HCT116 (cell line): ENCODE measurements at regions of chr19 and their contacts with region 1.

Region 1: DNA sequence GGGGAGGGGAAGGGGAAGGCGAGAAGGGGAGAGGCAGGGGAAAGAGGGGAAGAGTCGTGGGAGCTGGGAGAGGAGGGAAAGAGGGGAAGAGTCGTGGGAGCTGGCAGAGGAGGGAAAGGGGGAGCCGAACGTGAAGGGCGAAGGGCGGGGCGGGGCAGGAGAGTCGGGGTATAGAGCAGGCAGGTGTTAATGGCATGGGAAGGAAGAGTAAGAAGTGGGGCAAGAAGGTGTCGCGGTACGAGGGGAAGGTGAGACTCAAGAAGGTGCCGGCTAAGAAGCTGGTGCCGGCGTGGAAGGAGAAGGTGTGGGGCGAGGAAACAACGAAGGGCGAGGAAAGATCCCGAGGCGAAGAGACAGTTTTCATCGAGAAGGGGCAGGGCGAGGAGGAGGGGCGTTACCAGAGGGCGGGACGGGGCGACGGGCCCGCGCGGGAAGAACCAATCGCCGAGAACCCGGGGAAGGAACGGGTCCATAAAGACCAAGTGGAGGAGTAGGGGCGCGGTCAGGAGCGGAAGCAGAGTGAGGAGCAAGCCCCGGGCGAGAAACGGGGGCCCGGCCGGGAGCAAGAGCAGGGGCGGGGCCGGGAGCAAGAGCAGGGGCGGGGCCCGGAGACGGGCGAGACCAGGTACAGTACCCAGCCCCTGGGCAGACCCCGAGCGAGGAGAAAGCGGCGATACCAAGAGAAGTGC is 463 bp downstream of the CATSPERG start:
- DNase-seq: peak; percentile 91
- ATAC-seq: peak; percentile 81
- H3K4me3 ChIP-seq: peak overlapping the region; percentile 66 to 77
- H3K27ac ChIP-seq: peak overlapping the region; percentile 71
- H3K4me1 ChIP-seq: peaks cover 8 to 26% of the 10 kb centered on the region in 2 experiments
- H3K27me3 ChIP-seq: no peaks in the 10 kb centered on the region
- CTCF ChIP-seq: no peak
- POLR2A ChIP-seq: no peak
- RAD21 ChIP-seq: no peak

Region 2: GRCh38 chr19:38229585-38230073 is 106.5 kb before region 1 on chr19:
- CTCF ChIA-PET with region 1: interaction called, 15 read pairs
- POLR2A ChIA-PET with region 1: no interaction called
- RAD21 ChIA-PET with region 1: interaction called in 1 of 2 experiments, 4 read pairs
- intact Hi-C with region 1: loop called (anchors 1 kb)
- DNase-seq: peak; percentile 85
- ATAC-seq: peak; percentile 91
- H3K4me3 ChIP-seq: peak overlapping the region; percentile 54 to 61; a peak in 2 of 4 replicates
- H3K27ac ChIP-seq: no peak overlapping the region
- H3K4me1 ChIP-seq: peaks cover 10 to 33% of the 10 kb centered on the region in 2 experiments; a peak in 3 of 4 replicates
- H3K27me3 ChIP-seq: no peaks in the 10 kb centered on the region
- CTCF ChIP-seq: no peak
- POLR2A ChIP-seq: no peak
- RAD21 ChIP-seq: no peak

Region 3: GRCh38 chr19:38245826-38246498 is 90.1 kb before region 1 on chr19:
- CTCF ChIA-PET with region 1: interaction called, 40 read pairs
- POLR2A ChIA-PET with region 1: interaction called, 10 read pairs
- RAD21 ChIA-PET with region 1: interaction called, 3 to 4 read pairs
- intact Hi-C with region 1: loop called (anchors 1 kb)
- DNase-seq: no peak
- ATAC-seq: no peak
- H3K4me3 ChIP-seq: no peak overlapping the region
- H3K27ac ChIP-seq: no peak overlapping the region
- H3K4me1 ChIP-seq: peaks cover 15 to 40% of the 10 kb centered on the region in 2 experiments
- H3K27me3 ChIP-seq: no peaks in the 10 kb centered on the region
- CTCF ChIP-seq: no peak
- POLR2A ChIP-seq: no peak
- RAD21 ChIP-seq: no peak

Region 4: GRCh38 chr19:38374429-38375176 is 38.5 kb after region 1 on chr19 and contains the start of gene PSMD8:
- CTCF ChIA-PET with region 1: interaction called, 28 read pairs
- POLR2A ChIA-PET with region 1: interaction called, 8 read pairs
- RAD21 ChIA-PET with region 1: interaction called, 4 to 7 read pairs
- intact Hi-C with region 1: loop called (anchors 1 kb)
- DNase-seq: peak; percentile 99
- ATAC-seq: peak; percentile 98
- H3K4me3 ChIP-seq: peak within 1 kb of the TSS; percentile 97 to 98
- H3K27ac ChIP-seq: peak within 1 kb of the TSS; percentile 92
- H3K4me1 ChIP-seq: peaks cover 11 to 23% of the 10 kb centered on the region in 2 experiments
- H3K27me3 ChIP-seq: no peaks in the 10 kb centered on the region
- CTCF ChIP-seq: no peak
- POLR2A ChIP-seq: peak; percentile 92
- RAD21 ChIP-seq: peak; percentile 2; the same call in 1 of the 2 replicates
- total RNA-seq, gene PSMD8: 195 TPM

Region 5: GRCh38 chr19:38683393-38684080 is 347.4 kb after region 1 on chr19:
- CTCF ChIA-PET with region 1: no interaction called
- POLR2A ChIA-PET with region 1: no interaction called
- RAD21 ChIA-PET with region 1: no interaction called
- intact Hi-C with region 1: no loop called
- DNase-seq: peak; percentile 99
- ATAC-seq: peak; percentile 74
- H3K4me3 ChIP-seq: peak overlapping the region; percentile 36 to 53
- H3K27ac ChIP-seq: peak overlapping the region; percentile 98
- H3K4me1 ChIP-seq: peaks cover 82 to 99% of the 10 kb centered on the region in 2 experiments
- H3K27me3 ChIP-seq: no peaks in the 10 kb centered on the region
- CTCF ChIP-seq: no peak
- POLR2A ChIP-seq: no peak
- RAD21 ChIP-seq: no peak; the same call in none of the 2 replicates

Region 6: GRCh38 chr19:38729653-38730469 is 393.8 kb after region 1 on chr19:
- CTCF ChIA-PET with region 1: no interaction called
- POLR2A ChIA-PET with region 1: no interaction called
- RAD21 ChIA-PET with region 1: no interaction called
- intact Hi-C with region 1: no loop called
- DNase-seq: peak; percentile 24
- ATAC-seq: peak; percentile 74
- H3K4me3 ChIP-seq: no peak overlapping the region
- H3K27ac ChIP-seq: no peak overlapping the region
- H3K4me1 ChIP-seq: peaks cover 11 to 41% of the 10 kb centered on the region in 2 experiments; a peak in 3 of 4 replicates
- H3K27me3 ChIP-seq: no peaks in the 10 kb centered on the region
- CTCF ChIP-seq: peak; percentile 67 to 92 (median 87); a peak in 5 of 6 replicates
- POLR2A ChIP-seq: no peak
- RAD21 ChIP-seq: peak; percentile 62